ENCODE measurements at regions of chr9 and their contacts with region 1.

Region 1: DNA sequence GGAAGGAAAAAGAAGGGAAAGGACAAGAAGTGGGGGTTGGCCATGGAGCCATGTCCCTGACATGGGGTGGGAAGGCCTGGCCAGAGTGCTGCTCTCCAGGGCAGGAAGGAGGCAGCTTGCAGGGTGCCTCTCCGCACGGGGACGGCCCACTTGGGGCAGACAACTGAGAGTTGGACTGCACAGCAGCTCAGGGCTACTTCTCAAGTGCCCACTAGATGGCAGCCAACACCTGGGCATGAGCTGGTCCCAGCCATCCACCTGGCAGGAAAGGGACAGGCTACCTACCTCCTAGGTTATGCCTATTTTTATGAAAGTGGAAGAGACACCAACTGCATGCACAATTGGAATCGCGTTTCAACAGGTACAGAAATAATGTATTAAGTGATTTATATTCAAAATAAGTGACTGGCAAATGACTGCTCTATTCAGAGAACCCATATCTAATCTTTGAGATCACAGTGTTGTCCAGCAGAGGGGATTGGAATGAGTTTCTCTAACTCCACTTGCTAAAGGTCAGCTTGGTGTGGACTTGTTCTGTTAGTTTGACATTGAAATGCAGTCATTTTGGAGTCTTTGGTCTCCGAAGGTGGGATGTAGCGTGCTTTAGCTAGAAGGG is 113.4 kb downstream of the SYK start:
- DNase-seq: peak; percentile 91
- CTCF ChIP-seq: peak; percentile 74

Region 2: GRCh38 chr9:91562416-91562815 is 647.4 kb after region 1 on chr9:
- in situ Hi-C with region 1: no loop called
- DNase-seq: no peak
- CTCF ChIP-seq: no peak

Region 3: DNA sequence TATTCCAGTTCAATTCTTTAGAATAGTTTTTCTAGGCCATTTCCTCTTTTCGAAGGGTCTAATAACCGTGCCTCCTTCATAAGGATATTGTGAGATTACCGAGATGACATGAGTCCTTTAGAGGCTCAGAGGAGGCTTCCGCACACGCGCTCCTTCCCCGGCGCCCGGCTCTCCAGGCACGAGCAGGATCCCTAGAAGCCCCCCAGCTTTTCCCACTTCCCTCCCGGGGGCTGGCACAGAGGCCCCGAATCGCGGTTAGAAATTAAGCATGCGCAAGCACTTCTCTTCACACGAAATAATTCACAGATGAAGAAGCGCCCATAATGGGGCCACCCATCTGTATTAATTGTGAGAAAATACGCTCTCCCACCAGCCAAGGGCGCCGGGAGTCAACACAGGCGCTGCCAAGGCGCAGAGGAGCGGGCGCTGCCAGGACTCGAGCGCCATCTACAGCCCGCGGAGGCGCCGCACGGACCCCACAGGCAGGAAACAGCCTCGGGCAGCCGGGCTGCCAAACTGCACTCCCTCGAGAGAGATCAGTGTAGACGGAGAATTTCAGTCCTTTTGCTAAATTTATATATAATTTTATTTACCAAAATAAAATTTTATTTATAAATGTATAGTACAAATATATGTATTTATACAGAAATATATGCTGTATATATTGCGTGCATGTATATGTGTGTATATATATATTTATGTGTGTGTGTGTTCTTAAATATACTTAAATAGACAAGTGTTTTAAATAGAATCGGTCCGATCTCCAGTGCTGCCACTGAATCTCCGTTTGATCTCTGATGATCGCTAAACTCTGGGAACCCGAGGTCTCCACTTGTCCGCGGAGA is 766.7 kb after region 1 on chr9:
- in situ Hi-C with region 1: loop called (anchors 25 kb)
- DNase-seq: peak; percentile 88
- CTCF ChIP-seq: peak; percentile 88